CD4-positive, alpha-beta T cell (primary cell): ENCODE measurements at regions of chrX and their contacts with region 1.

Region 1: DNA sequence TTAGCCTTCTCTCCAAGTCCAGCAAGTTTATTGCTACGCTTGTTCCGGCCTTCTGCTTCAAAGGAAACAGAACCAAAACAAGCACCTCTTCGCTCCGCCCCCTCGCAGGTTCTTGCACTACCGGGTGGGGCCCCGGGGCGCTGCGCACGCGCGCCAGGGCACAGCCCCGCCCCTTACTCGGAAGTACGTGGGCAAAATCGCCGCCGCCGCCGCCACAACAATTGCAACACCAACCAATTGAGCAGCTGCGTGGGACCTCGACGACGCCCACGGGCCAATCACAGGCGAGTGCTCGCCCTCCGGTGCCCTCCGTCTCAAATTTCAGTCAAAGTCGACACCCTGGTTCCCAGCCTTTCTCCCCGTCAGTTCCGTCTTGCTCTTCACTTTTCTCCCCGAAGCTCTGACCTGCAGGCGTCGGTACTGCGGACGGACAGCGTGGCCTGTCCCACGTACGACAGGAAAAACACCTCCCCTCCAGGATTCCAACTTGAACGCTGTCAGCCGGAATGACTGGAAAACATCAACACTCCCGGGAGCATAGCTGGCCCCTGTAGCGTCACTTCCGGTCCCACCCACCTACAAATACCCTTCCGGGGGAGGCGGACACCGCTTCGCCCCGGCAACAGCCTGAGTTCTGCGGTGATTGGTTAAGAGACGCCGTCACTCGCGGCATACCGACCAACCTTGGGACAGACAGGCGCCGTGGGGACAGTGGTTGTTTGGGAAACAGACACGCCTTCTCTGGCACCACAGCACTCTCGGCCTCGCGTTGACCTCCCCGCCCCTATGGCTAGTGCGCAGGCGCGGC is 624 bp upstream of the OTUD5 start:
- DNase-seq: peak; percentile 86 to 97 (median 92)
- ATAC-seq: peak; percentile 80
- H3K4me3 ChIP-seq: peak overlapping the region; percentile 70
- H3K4me3 Mint-ChIP-seq: peak overlapping the region; percentile 99
- H3K27ac ChIP-seq: peak overlapping the region; percentile 93 to 98
- H3K27ac Mint-ChIP-seq: peak overlapping the region; percentile 99
- H3K4me1 ChIP-seq: peaks cover 54% of the 10 kb centered on the region
- H3K4me1 Mint-ChIP-seq: peaks cover 50% of the 10 kb centered on the region
- H3K27me3 ChIP-seq: no peaks in the 10 kb centered on the region
- H3K27me3 Mint-ChIP-seq: no peaks in the 10 kb centered on the region
- CTCF ChIP-seq: no peak

Region 2: GRCh38 chrX:48539345-48540027 is 418.5 kb before region 1 on chrX and contains the start of gene TBC1D25:
- CTCF ChIA-PET with region 1: no interaction called
- POLR2A ChIA-PET with region 1: interaction called, 13 read pairs
- intact Hi-C with region 1: no loop called
- DNase-seq: peak; percentile 89 to 99 (median 96)
- ATAC-seq: peak; percentile 87
- H3K4me3 ChIP-seq: peak within 1 kb of the TSS; percentile 74
- H3K4me3 Mint-ChIP-seq: peak within 1 kb of the TSS; percentile 93
- H3K27ac ChIP-seq: peak within 1 kb of the TSS; percentile 84 to 95
- H3K27ac Mint-ChIP-seq: peak within 1 kb of the TSS; percentile 97
- H3K4me1 ChIP-seq: peaks cover 21% of the 10 kb centered on the region
- H3K4me1 Mint-ChIP-seq: peaks cover 20% of the 10 kb centered on the region
- H3K27me3 ChIP-seq: no peaks in the 10 kb centered on the region
- H3K27me3 Mint-ChIP-seq: no peaks in the 10 kb centered on the region
- CTCF ChIP-seq: peak; percentile 30
- total RNA-seq, gene TBC1D25: 26.7 to 30.5 TPM

Region 3: GRCh38 chrX:48737213-48737938 is 220.7 kb before region 1 on chrX:
- CTCF ChIA-PET with region 1: no interaction called
- POLR2A ChIA-PET with region 1: interaction called, 22 read pairs
- intact Hi-C with region 1: loop called in 1 of 2 experiments (anchors 10 kb)
- DNase-seq: peak; percentile 72 to 97 (median 84)
- ATAC-seq: peak; percentile 94
- H3K4me3 ChIP-seq: peak overlapping the region; percentile 74
- H3K4me3 Mint-ChIP-seq: peak overlapping the region; percentile 92
- H3K27ac ChIP-seq: peak overlapping the region; percentile 76 to 92
- H3K27ac Mint-ChIP-seq: peak overlapping the region; percentile 96
- H3K4me1 ChIP-seq: peaks cover 17% of the 10 kb centered on the region
- H3K4me1 Mint-ChIP-seq: peaks cover 24% of the 10 kb centered on the region
- H3K27me3 ChIP-seq: no peaks in the 10 kb centered on the region
- H3K27me3 Mint-ChIP-seq: no peaks in the 10 kb centered on the region
- CTCF ChIP-seq: no peak

Region 4: DNA sequence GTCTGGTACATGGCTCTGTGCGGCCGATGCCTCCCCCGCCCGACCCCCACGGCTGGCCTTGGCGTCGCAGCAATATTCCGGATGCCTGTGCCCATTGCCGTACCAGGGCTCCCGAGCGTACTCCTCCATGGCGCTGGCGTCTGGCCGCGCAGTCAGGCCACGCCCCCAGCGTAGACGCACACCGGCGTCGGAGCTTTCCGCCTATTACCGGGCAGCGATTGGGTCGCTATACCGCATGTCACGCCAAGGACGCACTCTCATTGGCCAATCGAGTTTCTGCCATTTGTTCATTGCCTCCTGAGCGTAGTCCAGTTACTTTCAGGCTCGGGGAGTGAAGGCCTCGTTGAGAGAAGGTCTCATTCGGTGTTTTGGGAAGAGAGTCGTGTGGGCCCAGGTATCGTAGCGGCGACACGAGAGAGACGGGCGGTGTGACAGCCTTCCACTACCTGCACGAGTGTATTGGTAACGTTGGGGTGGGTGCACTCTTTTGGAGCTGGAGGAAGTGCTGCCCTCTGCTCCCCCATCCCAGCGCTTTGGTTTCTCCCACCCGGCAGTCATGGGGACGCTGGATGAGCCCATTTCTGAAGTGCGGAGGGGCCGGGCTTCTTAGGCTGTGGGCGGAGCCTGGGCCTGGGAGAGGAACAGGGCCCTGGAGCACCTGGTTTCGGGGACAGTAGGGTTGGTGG is 60.3 kb before region 1 on chrX and contains the starts of genes PQBP1 and TIMM17B:
- CTCF ChIA-PET with region 1: no interaction called
- POLR2A ChIA-PET with region 1: interaction called, 47 read pairs
- intact Hi-C with region 1: no loop called
- DNase-seq: peak; percentile 73 to 96 (median 84)
- ATAC-seq: peak; percentile 84
- H3K4me3 ChIP-seq: peak within 1 kb of the TSS; percentile 91
- H3K4me3 Mint-ChIP-seq: peak within 1 kb of the TSS; percentile 91
- H3K27ac ChIP-seq: peak within 1 kb of the TSS; percentile 93 to 98
- H3K27ac Mint-ChIP-seq: peak within 1 kb of the TSS; percentile 90
- H3K4me1 ChIP-seq: peaks cover 33% of the 10 kb centered on the region
- H3K4me1 Mint-ChIP-seq: peaks cover 27% of the 10 kb centered on the region
- H3K27me3 ChIP-seq: no peaks in the 10 kb centered on the region
- H3K27me3 Mint-ChIP-seq: no peaks in the 10 kb centered on the region
- CTCF ChIP-seq: no peak
- total RNA-seq, gene PQBP1: 73.0 to 76.6 TPM
- total RNA-seq, gene TIMM17B: 40.0 to 40.3 TPM

Region 5: DNA sequence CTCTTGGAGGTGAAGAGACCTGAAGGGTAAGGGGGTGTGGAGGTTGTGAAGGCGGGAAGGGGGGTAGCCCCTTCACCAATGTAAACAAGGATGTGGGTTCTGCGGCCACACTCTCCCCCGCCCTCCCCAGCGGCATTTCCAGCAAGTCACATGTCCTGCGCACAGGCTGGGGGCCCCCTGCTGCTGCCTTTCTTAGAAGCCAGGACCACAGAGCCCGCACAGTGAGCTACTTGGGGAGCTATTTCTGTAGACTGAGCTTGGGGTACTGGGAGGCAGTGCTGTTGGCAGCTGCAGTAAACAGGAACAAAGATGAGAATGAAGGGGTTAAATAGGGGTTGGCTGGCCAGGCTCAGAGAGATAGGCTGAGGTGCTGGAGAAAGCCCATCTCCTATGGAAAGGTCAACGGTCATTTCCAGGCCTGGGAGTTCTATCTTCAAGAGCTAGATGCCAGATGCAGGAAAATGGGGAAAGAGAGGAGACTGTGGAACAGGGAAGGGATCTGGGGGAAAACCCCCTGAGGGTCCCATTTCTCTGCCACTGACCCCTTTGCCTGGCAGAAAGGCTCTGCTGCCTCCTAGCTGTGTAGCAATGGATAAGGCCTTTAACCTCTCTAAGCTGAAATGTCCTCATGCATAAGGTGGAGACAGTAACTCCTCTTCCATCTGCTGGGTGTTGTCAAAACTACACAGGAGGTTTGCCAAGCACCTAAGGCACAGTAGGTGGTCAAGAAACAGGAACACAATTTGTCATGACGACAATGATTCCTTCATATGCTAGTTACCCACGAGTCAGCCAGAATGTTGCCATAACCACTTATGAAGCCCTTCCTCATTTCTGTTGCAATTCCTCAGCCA is 20.8 kb before region 1 on chrX:
- CTCF ChIA-PET with region 1: interaction called, 3 read pairs
- POLR2A ChIA-PET with region 1: interaction called, 150 read pairs
- intact Hi-C with region 1: no loop called
- DNase-seq: peak; percentile 77 to 94 (median 88)
- ATAC-seq: peak; percentile 68
- H3K4me3 ChIP-seq: peak overlapping the region; percentile 49
- H3K4me3 Mint-ChIP-seq: peak overlapping the region; percentile 82
- H3K27ac ChIP-seq: peak overlapping the region; percentile 92 to 93
- H3K27ac Mint-ChIP-seq: peak overlapping the region; percentile 98
- H3K4me1 ChIP-seq: peaks cover 85% of the 10 kb centered on the region
- H3K4me1 Mint-ChIP-seq: peaks cover 90% of the 10 kb centered on the region
- H3K27me3 ChIP-seq: no peaks in the 10 kb centered on the region
- H3K27me3 Mint-ChIP-seq: no peaks in the 10 kb centered on the region
- CTCF ChIP-seq: peak; percentile 40

Region 6: GRCh38 chrX:49002091-49002935 is 44.3 kb after region 1 on chrX and contains the start of gene GRIPAP1:
- CTCF ChIA-PET with region 1: interaction called, 4 read pairs
- POLR2A ChIA-PET with region 1: interaction called, 34 read pairs
- intact Hi-C with region 1: loop called in 1 of 2 experiments (anchors 5 kb)
- DNase-seq: peak; percentile 61 to 93 (median 72)
- ATAC-seq: peak; percentile 77
- H3K4me3 ChIP-seq: peak within 1 kb of the TSS; percentile 93
- H3K4me3 Mint-ChIP-seq: peak within 1 kb of the TSS; percentile 96
- H3K27ac ChIP-seq: peak within 1 kb of the TSS; percentile 84 to 96
- H3K27ac Mint-ChIP-seq: peak within 1 kb of the TSS; percentile 98
- H3K4me1 ChIP-seq: peaks cover 27% of the 10 kb centered on the region
- H3K4me1 Mint-ChIP-seq: peaks cover 26% of the 10 kb centered on the region
- H3K27me3 ChIP-seq: no peaks in the 10 kb centered on the region
- H3K27me3 Mint-ChIP-seq: no peaks in the 10 kb centered on the region
- CTCF ChIP-seq: no peak
- total RNA-seq, gene GRIPAP1: 100 to 101 TPM

Region 7: GRCh38 chrX:49191033-49191871 is 233.2 kb after region 1 on chrX:
- CTCF ChIA-PET with region 1: no interaction called
- POLR2A ChIA-PET with region 1: interaction called, 12 read pairs
- intact Hi-C with region 1: no loop called
- DNase-seq: peak; percentile 64 to 97 (median 79)
- ATAC-seq: peak; percentile 88
- H3K4me3 ChIP-seq: peak overlapping the region; percentile 74
- H3K4me3 Mint-ChIP-seq: peak overlapping the region; percentile 90
- H3K27ac ChIP-seq: peak overlapping the region; percentile 70 to 72
- H3K27ac Mint-ChIP-seq: peak overlapping the region; percentile 67
- H3K4me1 ChIP-seq: peaks cover 27% of the 10 kb centered on the region
- H3K4me1 Mint-ChIP-seq: peaks cover 28% of the 10 kb centered on the region
- H3K27me3 ChIP-seq: no peaks in the 10 kb centered on the region
- H3K27me3 Mint-ChIP-seq: no peaks in the 10 kb centered on the region
- CTCF ChIP-seq: no peak